ENCODE measurements at regions of chr3 and their contacts with region 1.

Region 1: GRCh38 chr3:137110484-137110883 is 152.7 kb downstream of the IL20RB start:
- DNase-seq: no peak
- ATAC-seq: peak; percentile 39
- H3K4me3 Mint-ChIP-seq: no peak overlapping the region
- H3K27ac Mint-ChIP-seq: no peak overlapping the region
- H3K4me1 Mint-ChIP-seq: no peaks in the 10 kb centered on the region
- H3K27me3 Mint-ChIP-seq: peaks cover 13% of the 10 kb centered on the region

Region 2: DNA sequence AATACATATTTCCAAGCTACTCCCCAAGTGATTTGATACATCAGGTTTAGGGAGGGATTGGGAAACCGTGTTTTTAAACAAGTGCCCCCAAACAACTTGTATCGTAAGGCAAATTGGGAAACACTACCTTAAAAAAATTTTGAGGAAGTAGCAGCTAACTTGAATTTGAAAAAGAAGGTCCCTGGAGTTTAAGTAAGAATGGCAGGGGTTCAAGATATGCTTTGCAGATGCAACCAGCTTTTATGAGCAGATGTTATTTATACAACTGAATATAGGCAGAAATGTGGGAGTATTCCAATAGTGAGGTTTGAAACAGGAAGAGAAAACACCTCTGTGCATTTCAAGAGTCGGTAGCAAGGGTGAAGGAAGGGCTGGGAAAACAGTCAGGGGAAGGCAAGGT is 13.1 kb before region 1 on chr3:
- CTCF ChIA-PET with region 1: interaction called, 15 read pairs
- POLR2A ChIA-PET with region 1: no interaction called
- intact Hi-C with region 1: no loop called
- DNase-seq: no peak
- ATAC-seq: no peak
- H3K4me3 Mint-ChIP-seq: no peak overlapping the region
- H3K27ac Mint-ChIP-seq: no peak overlapping the region
- H3K4me1 Mint-ChIP-seq: no peaks in the 10 kb centered on the region
- H3K27me3 Mint-ChIP-seq: peaks cover 13% of the 10 kb centered on the region

Measured in activated CD4-positive, alpha-beta T cell treated with anti-CD3 and anti-CD28 coated beads for 36 hours (primary cell).